Naive thymus-derived CD4-positive, alpha-beta T cell (primary cell): ENCODE measurements at regions of chr1 and their contacts with region 1.

Region 1: GRCh38 chr1:21963477-21964217 is 13.2 kb upstream of the CELA3B start:
- DNase-seq: peak; percentile 63 to 89 (median 78)
- ATAC-seq: peak; percentile 95
- H3K4me3 ChIP-seq: no peak overlapping the region
- H3K4me3 Mint-ChIP-seq: peak overlapping the region in 2 of 10 donors; percentile 2 to 11
- H3K27ac ChIP-seq: no peak overlapping the region
- H3K27ac Mint-ChIP-seq: peak overlapping the region; percentile 38 to 94 (median 63)
- H3K4me1 ChIP-seq: no peaks in the 10 kb centered on the region
- H3K4me1 Mint-ChIP-seq: peaks cover 6 to 18% (median 11%) of the 10 kb centered on the region in 7 donors
- H3K27me3 ChIP-seq: no peaks in the 10 kb centered on the region
- H3K27me3 Mint-ChIP-seq: peaks cover 0 to 7% (median 0%) of the 10 kb centered on the region in 5 donors

Region 2: GRCh38 chr1:21176586-21177555 is 786.8 kb before region 1 on chr1 and contains the start of gene EIF4G3:
- CTCF ChIA-PET with region 1: no interaction called
- POLR2A ChIA-PET with region 1: no interaction called
- intact Hi-C with region 1: no loop called
- DNase-seq: peak; percentile 96 to 100 (median 99)
- ATAC-seq: peak; percentile 96
- H3K4me3 ChIP-seq: peak within 1 kb of the TSS; percentile 87
- H3K4me3 Mint-ChIP-seq: peak within 1 kb of the TSS; percentile 83 to 97 (median 91)
- H3K27ac ChIP-seq: peak within 1 kb of the TSS; percentile 75
- H3K27ac Mint-ChIP-seq: peak within 1 kb of the TSS; percentile 87 to 95 (median 92)
- H3K4me1 ChIP-seq: peaks cover 8 to 9% of the 10 kb centered on the region in 2 donors
- H3K4me1 Mint-ChIP-seq: peaks cover 11 to 28% (median 19%) of the 10 kb centered on the region in 7 donors
- H3K27me3 ChIP-seq: no peaks in the 10 kb centered on the region
- H3K27me3 Mint-ChIP-seq: peaks cover 0 to 10% (median 0%) of the 10 kb centered on the region in 5 donors
- total RNA-seq, gene EIF4G3: 15.0 to 46.3 (median 29.1) TPM

Region 3: GRCh38 chr1:21355956-21356355 is 607.7 kb before region 1 on chr1:
- CTCF ChIA-PET with region 1: no interaction called
- POLR2A ChIA-PET with region 1: no interaction called
- intact Hi-C with region 1: no loop called
- DNase-seq: no peak
- ATAC-seq: no peak
- H3K4me3 ChIP-seq: no peak overlapping the region
- H3K4me3 Mint-ChIP-seq: no peak overlapping the region
- H3K27ac ChIP-seq: no peak overlapping the region
- H3K27ac Mint-ChIP-seq: no peak overlapping the region
- H3K4me1 ChIP-seq: no peaks in the 10 kb centered on the region
- H3K4me1 Mint-ChIP-seq: peaks cover 0 to 13% (median 7%) of the 10 kb centered on the region in 7 donors
- H3K27me3 ChIP-seq: no peaks in the 10 kb centered on the region
- H3K27me3 Mint-ChIP-seq: peaks cover 0 to 12% (median 0%) of the 10 kb centered on the region in 5 donors

Region 4: GRCh38 chr1:21508580-21509350 is 454.9 kb before region 1 on chr1:
- CTCF ChIA-PET with region 1: no interaction called
- POLR2A ChIA-PET with region 1: no interaction called
- intact Hi-C with region 1: loop called in 1 of 2 experiments (anchors 1 kb)
- DNase-seq: peak; percentile 20 to 83 (median 48)
- ATAC-seq: peak; percentile 90
- H3K4me3 ChIP-seq: no peak overlapping the region
- H3K4me3 Mint-ChIP-seq: peak overlapping the region; percentile 68 to 95 (median 80)
- H3K27ac ChIP-seq: no peak overlapping the region
- H3K27ac Mint-ChIP-seq: peak overlapping the region in 1 of 9 donors; percentile 25
- H3K4me1 ChIP-seq: peaks cover 0 to 5% of the 10 kb centered on the region in 2 donors
- H3K4me1 Mint-ChIP-seq: peaks cover 4 to 18% (median 7%) of the 10 kb centered on the region in 7 donors
- H3K27me3 ChIP-seq: peaks cover 0 to 5% of the 10 kb centered on the region in 2 donors
- H3K27me3 Mint-ChIP-seq: peaks cover 55 to 64% (median 60%) of the 10 kb centered on the region in 5 donors

Region 5: DNA sequence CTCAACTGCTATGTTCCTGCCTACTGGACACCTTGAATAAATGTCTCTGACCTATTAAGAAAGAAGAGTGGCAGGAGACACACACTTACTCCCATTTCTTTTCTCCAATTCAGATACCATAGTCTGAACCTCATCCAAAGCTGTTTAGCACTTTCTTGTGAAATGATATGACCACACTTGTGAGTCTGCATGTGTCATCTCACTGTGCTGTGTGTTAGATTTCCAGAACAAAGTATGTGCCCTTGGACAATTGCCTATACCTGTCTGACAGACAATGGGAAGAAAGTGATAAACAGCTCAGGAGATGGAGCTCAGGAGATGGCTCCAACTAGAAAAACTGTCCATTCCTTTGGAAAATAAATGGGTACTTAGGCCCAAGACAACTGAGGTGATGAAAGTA is 229.1 kb before region 1 on chr1:
- CTCF ChIA-PET with region 1: interaction called, 3 read pairs
- POLR2A ChIA-PET with region 1: no interaction called
- intact Hi-C with region 1: loop called in 1 of 2 experiments (anchors 2 kb)
- DNase-seq: no peak
- ATAC-seq: no peak
- H3K4me3 ChIP-seq: no peak overlapping the region
- H3K4me3 Mint-ChIP-seq: no peak overlapping the region
- H3K27ac ChIP-seq: no peak overlapping the region
- H3K27ac Mint-ChIP-seq: no peak overlapping the region
- H3K4me1 ChIP-seq: no peaks in the 10 kb centered on the region
- H3K4me1 Mint-ChIP-seq: no peaks in the 10 kb centered on the region
- H3K27me3 ChIP-seq: no peaks in the 10 kb centered on the region
- H3K27me3 Mint-ChIP-seq: no peaks in the 10 kb centered on the region

Region 6: DNA sequence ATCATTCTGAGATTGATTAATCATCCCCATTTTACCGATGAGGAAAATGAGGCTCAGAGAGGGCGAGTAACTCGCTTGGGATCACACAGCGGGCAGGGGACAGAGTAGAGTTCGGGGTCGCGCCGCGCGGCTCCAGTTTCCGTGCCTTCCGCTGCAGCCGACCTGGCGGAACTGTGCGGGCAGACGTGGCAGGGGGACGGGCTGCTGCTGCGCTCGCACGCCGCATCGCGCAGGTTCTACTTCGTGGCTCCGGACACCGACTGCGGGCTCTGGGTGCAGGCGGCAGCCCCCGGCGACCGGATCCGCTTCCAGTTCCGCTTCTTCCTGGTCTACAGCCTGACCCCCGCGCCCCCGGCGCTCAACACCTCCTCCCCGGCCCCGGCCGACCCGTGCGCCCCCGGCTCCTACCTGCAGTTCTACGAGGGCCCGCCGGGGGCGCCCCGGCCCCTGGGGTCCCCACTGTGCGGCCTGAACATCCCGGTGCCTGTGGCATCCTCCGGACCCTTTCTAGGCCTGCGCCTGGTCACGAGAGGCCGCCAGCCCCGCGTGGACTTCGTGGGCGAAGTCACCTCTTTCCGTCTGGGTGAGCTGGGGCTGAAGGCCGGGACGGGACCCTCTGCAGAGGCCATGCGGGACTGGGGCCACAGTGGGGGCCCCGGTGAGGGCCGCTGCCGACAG is 149.3 kb before region 1 on chr1:
- CTCF ChIA-PET with region 1: interaction called, 3 read pairs
- POLR2A ChIA-PET with region 1: interaction called, 3 read pairs
- intact Hi-C with region 1: loop called in 1 of 2 experiments (anchors 1 kb)
- DNase-seq: peak in 6 of 9 donors; percentile 19 to 46 (median 28)
- ATAC-seq: peak; percentile 80
- H3K4me3 ChIP-seq: peak overlapping the region; percentile 33
- H3K4me3 Mint-ChIP-seq: peak overlapping the region; percentile 45 to 84 (median 71)
- H3K27ac ChIP-seq: no peak overlapping the region
- H3K27ac Mint-ChIP-seq: no peak overlapping the region
- H3K4me1 ChIP-seq: no peaks in the 10 kb centered on the region
- H3K4me1 Mint-ChIP-seq: peaks cover 5 to 14% (median 8%) of the 10 kb centered on the region in 7 donors
- H3K27me3 ChIP-seq: peaks cover 0 to 4% of the 10 kb centered on the region in 2 donors
- H3K27me3 Mint-ChIP-seq: peaks cover 10 to 31% (median 15%) of the 10 kb centered on the region in 5 donors

Region 7: GRCh38 chr1:22416555-22417454 is 453.2 kb after region 1 on chr1:
- CTCF ChIA-PET with region 1: no interaction called
- POLR2A ChIA-PET with region 1: no interaction called
- intact Hi-C with region 1: loop called in 1 of 2 experiments (anchors 1 kb)
- DNase-seq: peak; percentile 42 to 76 (median 64)
- ATAC-seq: peak; percentile 86
- H3K4me3 ChIP-seq: no peak overlapping the region
- H3K4me3 Mint-ChIP-seq: no peak overlapping the region
- H3K27ac ChIP-seq: no peak overlapping the region
- H3K27ac Mint-ChIP-seq: peak overlapping the region in 1 of 9 donors; percentile 25
- H3K4me1 ChIP-seq: no peaks in the 10 kb centered on the region
- H3K4me1 Mint-ChIP-seq: peaks cover 0 to 7% (median 3%) of the 10 kb centered on the region in 7 donors
- H3K27me3 ChIP-seq: peaks cover 0 to 8% of the 10 kb centered on the region in 2 donors
- H3K27me3 Mint-ChIP-seq: peaks cover 30 to 39% (median 35%) of the 10 kb centered on the region in 5 donors